Activated CD4-positive, alpha-beta T cell treated with anti-CD3 and anti-CD28 coated beads, Interleukin-2, amount 10 ng/mL, durations not matched to agents 7 days and 5 days (primary cell): ENCODE measurements at regions of chr9 and their contacts with region 1.

Region 1: GRCh38 chr9:133184962-133185361 is 21.2 kb upstream of the GBGT1 start:
- DNase-seq: peak; percentile 62
- H3K4me3 Mint-ChIP-seq: no peak overlapping the region
- H3K27ac Mint-ChIP-seq: no peak overlapping the region
- H3K4me1 Mint-ChIP-seq: peaks cover 19% of the 10 kb centered on the region
- H3K27me3 Mint-ChIP-seq: peaks cover 30% of the 10 kb centered on the region

Region 2: GRCh38 chr9:133170716-133171559 is 14.0 kb before region 1 on chr9:
- CTCF ChIA-PET with region 1: interaction called, 12 read pairs
- POLR2A ChIA-PET with region 1: interaction called, 3 read pairs
- DNase-seq: no peak
- H3K4me3 Mint-ChIP-seq: no peak overlapping the region
- H3K27ac Mint-ChIP-seq: no peak overlapping the region
- H3K4me1 Mint-ChIP-seq: no peaks in the 10 kb centered on the region
- H3K27me3 Mint-ChIP-seq: peaks cover 6% of the 10 kb centered on the region

Region 3: GRCh38 chr9:133199648-133200321 is 14.8 kb after region 1 on chr9:
- CTCF ChIA-PET with region 1: interaction called, 10 read pairs
- POLR2A ChIA-PET with region 1: no interaction called
- DNase-seq: peak; percentile 59
- H3K4me3 Mint-ChIP-seq: peak overlapping the region; percentile 73
- H3K27ac Mint-ChIP-seq: peak overlapping the region; percentile 76
- H3K4me1 Mint-ChIP-seq: peaks cover 12% of the 10 kb centered on the region
- H3K27me3 Mint-ChIP-seq: peaks cover 12% of the 10 kb centered on the region